ENCODE measurements at regions of chr1 and their contacts with region 1.

Region 1: DNA sequence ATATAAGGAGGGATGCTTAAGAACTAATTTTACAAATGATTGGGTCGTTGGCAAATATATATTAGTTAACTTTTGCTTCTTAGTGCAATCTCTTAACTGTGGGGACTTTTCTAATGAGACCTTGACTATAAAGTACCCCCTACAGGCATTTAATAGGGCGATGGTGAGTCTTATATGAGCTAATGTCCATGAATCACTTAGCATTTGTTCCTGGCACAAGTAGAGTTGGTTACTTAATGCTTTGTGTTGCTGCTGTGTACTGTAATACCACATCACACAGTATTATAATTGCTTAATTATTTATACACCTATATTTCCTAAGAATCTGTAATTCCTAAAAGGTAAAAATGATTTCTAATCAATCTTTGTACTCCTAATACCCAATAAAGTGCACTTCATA is 25.3 kb upstream of the TMCO1 start:
- DNase-seq: no peak
- ATAC-seq: no peak
- H3K4me3 ChIP-seq: no peak overlapping the region
- H3K27ac ChIP-seq: no peak overlapping the region
- H3K4me1 ChIP-seq: no peaks in the 10 kb centered on the region
- H3K27me3 ChIP-seq: no peaks in the 10 kb centered on the region
- CTCF ChIP-seq: no peak

Region 2: GRCh38 chr1:165742194-165742593 is 51.8 kb before region 1 on chr1:
- CTCF ChIA-PET with region 1: interaction called, 15 read pairs
- POLR2A ChIA-PET with region 1: no interaction called
- in situ Hi-C with region 1: no loop called
- intact Hi-C with region 1: no loop called
- DNase-seq: no peak
- ATAC-seq: no peak
- H3K4me3 ChIP-seq: no peak overlapping the region
- H3K27ac ChIP-seq: no peak overlapping the region
- H3K4me1 ChIP-seq: no peaks in the 10 kb centered on the region
- H3K27me3 ChIP-seq: no peaks in the 10 kb centered on the region
- CTCF ChIP-seq: no peak

Measured in Panc1 (cell line).